ENCODE measurements at regions of chr7 and their contacts with region 1.

Region 1: GRCh38 chr7:99386584-99387238 is 12.2 kb downstream of the ARPC1B start:
- DNase-seq: no peak
- ATAC-seq: peak; percentile 63
- H3K4me3 Mint-ChIP-seq: no peak overlapping the region
- H3K27ac Mint-ChIP-seq: peak overlapping the region; percentile 59
- H3K4me1 Mint-ChIP-seq: peaks cover 31% of the 10 kb centered on the region
- H3K27me3 Mint-ChIP-seq: no peaks in the 10 kb centered on the region
- CTCF ChIP-seq: no peak

Region 2: GRCh38 chr7:99190359-99191032 is 196.2 kb before region 1 on chr7:
- CTCF ChIA-PET with region 1: no interaction called
- POLR2A ChIA-PET with region 1: no interaction called
- intact Hi-C with region 1: no loop called
- DNase-seq: no peak
- ATAC-seq: no peak
- H3K4me3 Mint-ChIP-seq: no peak overlapping the region
- H3K27ac Mint-ChIP-seq: no peak overlapping the region
- H3K4me1 Mint-ChIP-seq: no peaks in the 10 kb centered on the region
- H3K27me3 Mint-ChIP-seq: peaks cover 24% of the 10 kb centered on the region
- CTCF ChIP-seq: no peak

Region 3: GRCh38 chr7:99364961-99365817 is 21.5 kb before region 1 on chr7:
- CTCF ChIA-PET with region 1: interaction called, 7 read pairs
- POLR2A ChIA-PET with region 1: interaction called, 5 read pairs
- intact Hi-C with region 1: loop called (anchors 1 kb)
- DNase-seq: peak; percentile 55
- ATAC-seq: peak; percentile 99
- H3K4me3 Mint-ChIP-seq: no peak overlapping the region
- H3K27ac Mint-ChIP-seq: no peak overlapping the region
- H3K4me1 Mint-ChIP-seq: no peaks in the 10 kb centered on the region
- H3K27me3 Mint-ChIP-seq: no peaks in the 10 kb centered on the region
- CTCF ChIP-seq: no peak